ENCODE measurements at regions of chr3 and their contacts with region 1.

Region 1: GRCh38 chr3:194134757-194135528 is 1.0 kb upstream of the HES1 start:
- DNase-seq: peak; percentile 97
- H3K4me3 ChIP-seq: peak overlapping the region; percentile 56 to 68 (median 64)
- H3K27ac ChIP-seq: peak overlapping the region; percentile 90 to 99 (median 96)
- H3K4me1 ChIP-seq: peaks cover 0 to 71% (median 59%) of the 10 kb centered on the region in 4 donors
- H3K27me3 ChIP-seq: no peaks in the 10 kb centered on the region
- CTCF ChIP-seq: no peak
- EP300 ChIP-seq: peak; percentile 51 to 87 (median 69)
- POLR2A ChIP-seq: peak; percentile 28 to 49

Region 2: DNA sequence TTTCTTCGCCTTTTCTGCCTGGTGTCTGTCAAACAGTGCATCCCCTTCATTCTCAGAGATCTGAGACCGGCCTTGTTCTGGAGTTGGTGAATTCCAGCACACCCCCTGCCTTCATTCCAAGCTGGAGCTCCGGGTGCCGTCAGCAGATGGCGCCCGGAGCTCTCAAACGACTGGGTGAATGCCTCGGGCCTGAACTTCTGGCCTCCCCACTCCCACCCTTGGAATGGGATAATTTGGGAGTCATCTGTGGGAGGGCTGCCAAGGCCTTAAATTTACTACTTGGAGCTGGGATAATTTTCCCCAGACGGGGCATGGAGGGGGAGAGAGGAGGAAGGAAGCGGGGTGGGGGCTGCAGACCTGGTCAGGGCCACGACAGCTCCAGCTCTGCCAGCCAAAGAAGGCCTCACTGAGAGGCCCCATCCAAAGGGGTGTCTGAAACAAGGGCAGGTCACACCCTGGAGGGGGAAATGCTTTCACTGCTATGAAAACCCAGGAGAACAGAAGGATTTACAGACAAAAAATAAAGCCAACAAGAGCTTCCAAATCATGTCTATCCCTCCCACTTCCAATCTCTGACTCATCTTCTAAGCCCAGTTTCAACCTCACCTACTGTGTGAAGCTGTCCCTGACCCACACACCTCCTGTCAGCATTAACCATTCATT is 354.0 kb before region 1 on chr3:
- intact Hi-C with region 1: loop called (anchors 2 kb)
- DNase-seq: peak; percentile 88
- H3K4me3 ChIP-seq: no peak overlapping the region
- H3K27ac ChIP-seq: peak overlapping the region; percentile 30 to 68 (median 53)
- H3K4me1 ChIP-seq: peaks cover 0 to 16% (median 12%) of the 10 kb centered on the region in 4 donors
- H3K27me3 ChIP-seq: no peaks in the 10 kb centered on the region
- CTCF ChIP-seq: peak; percentile 70 to 89 (median 80)
- EP300 ChIP-seq: no peak
- POLR2A ChIP-seq: no peak

Region 3: DNA sequence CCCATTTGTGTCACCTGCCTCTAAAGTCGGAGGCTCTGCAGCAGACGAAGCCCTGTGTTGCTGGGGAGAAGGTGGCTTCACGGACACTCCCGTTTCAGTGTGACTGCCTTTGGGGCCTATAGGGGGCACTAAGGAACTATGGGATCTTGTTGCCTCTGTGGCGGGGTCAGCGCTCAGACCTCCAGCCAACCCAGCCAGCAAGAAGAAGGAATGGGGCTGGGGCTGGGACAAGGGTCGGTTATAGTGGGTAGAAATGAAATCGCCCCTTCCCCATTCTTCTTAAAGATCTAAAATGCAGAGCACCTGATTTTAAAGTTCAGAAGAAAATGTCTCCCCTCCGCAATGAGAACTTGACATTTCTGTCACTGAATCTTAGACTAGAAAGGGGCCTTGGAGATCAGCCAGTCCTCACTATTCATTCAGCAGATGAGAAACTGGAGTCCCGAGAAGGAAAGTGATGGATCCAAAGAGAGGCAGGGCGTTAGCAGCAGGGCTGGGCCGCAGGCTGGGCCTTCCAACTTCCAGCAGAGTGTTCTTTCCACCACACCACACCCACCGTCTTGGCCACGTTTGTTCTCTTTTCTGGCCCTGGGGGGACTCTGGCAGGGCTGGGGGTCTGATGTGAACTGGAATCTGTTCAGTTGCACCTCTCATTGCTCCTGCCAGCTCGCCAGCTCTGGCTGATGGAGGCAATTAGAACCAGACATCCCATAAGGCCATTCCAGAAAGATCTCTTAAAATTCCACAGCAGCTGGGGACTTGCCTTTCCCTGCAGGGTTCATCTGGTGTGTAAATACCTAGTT is 346.6 kb before region 1 on chr3:
- intact Hi-C with region 1: loop called (anchors 2 kb)
- DNase-seq: peak; percentile 84
- H3K4me3 ChIP-seq: no peak overlapping the region
- H3K27ac ChIP-seq: peak overlapping the region; percentile 30 to 61 (median 47)
- H3K4me1 ChIP-seq: peaks cover 3 to 18% (median 11%) of the 10 kb centered on the region in 4 donors
- H3K27me3 ChIP-seq: no peaks in the 10 kb centered on the region
- CTCF ChIP-seq: peak; percentile 25 to 81 (median 74)
- EP300 ChIP-seq: no peak
- POLR2A ChIP-seq: no peak

Region 4: GRCh38 chr3:194003125-194004057 is 131.6 kb before region 1 on chr3:
- intact Hi-C with region 1: loop called (anchors 2 kb)
- DNase-seq: peak; percentile 95
- H3K4me3 ChIP-seq: peak overlapping the region; percentile 26 to 53 (median 45)
- H3K27ac ChIP-seq: peak overlapping the region; percentile 77 to 87 (median 84)
- H3K4me1 ChIP-seq: peaks cover 0 to 24% (median 21%) of the 10 kb centered on the region in 4 donors
- H3K27me3 ChIP-seq: no peaks in the 10 kb centered on the region
- CTCF ChIP-seq: no peak
- EP300 ChIP-seq: peak; percentile 19 to 37 (median 32)
- POLR2A ChIP-seq: peak in 1 of 2 donors; percentile 21

Region 5: GRCh38 chr3:194070634-194071409 is 64.1 kb before region 1 on chr3:
- intact Hi-C with region 1: loop called (anchors 2 kb)
- DNase-seq: peak; percentile 88
- H3K4me3 ChIP-seq: peak overlapping the region; percentile 37 to 64 (median 56)
- H3K27ac ChIP-seq: peak overlapping the region; percentile 80 to 85 (median 82)
- H3K4me1 ChIP-seq: peaks cover 0 to 18% (median 16%) of the 10 kb centered on the region in 4 donors
- H3K27me3 ChIP-seq: no peaks in the 10 kb centered on the region
- CTCF ChIP-seq: no peak
- EP300 ChIP-seq: no peak
- POLR2A ChIP-seq: no peak

Region 6: DNA sequence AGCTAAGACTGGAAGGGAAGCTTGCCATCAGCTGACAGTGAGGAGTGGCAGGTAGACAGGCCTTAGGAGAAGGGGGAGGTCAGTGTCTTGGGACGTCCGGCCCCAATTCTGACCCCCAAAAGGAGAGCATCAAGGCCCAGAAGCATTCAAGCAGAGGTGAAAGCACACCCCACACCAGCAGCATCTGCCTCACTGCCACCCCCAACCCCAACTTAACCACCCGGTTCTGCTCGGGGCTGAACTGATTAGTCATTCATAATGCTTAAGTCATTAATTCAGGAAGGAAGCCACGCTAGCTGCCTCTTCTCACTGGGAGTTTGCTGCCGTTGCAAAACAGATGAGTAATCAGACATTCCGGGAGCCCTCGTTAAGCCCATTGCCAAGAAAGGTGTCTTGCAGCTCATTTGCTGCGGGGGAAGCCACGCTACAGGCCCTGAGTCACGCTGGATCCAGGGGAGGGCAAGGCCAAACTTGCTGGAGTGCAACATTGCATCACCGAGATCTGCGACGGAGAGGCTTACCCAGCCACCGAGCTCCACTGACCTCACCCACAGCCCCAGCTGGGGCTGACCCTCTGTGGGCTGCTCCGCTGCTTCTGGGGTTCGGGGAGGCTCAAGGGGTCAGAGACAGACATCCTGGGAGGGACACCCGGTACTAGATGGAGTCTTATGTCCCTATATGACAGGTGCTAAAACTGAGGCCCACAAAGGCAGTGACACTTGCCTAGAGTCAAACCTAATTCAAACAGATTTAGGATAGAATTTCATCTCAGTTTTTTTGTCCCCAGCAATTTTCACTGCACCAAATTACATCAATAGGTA is 45.4 kb before region 1 on chr3:
- intact Hi-C with region 1: loop called (anchors 5 kb)
- DNase-seq: peak; percentile 96
- H3K4me3 ChIP-seq: no peak overlapping the region
- H3K27ac ChIP-seq: peak overlapping the region; percentile 61 to 77 (median 75)
- H3K4me1 ChIP-seq: peaks cover 0 to 36% (median 19%) of the 10 kb centered on the region in 4 donors
- H3K27me3 ChIP-seq: no peaks in the 10 kb centered on the region
- CTCF ChIP-seq: no peak
- EP300 ChIP-seq: no peak
- POLR2A ChIP-seq: no peak

Region 7: DNA sequence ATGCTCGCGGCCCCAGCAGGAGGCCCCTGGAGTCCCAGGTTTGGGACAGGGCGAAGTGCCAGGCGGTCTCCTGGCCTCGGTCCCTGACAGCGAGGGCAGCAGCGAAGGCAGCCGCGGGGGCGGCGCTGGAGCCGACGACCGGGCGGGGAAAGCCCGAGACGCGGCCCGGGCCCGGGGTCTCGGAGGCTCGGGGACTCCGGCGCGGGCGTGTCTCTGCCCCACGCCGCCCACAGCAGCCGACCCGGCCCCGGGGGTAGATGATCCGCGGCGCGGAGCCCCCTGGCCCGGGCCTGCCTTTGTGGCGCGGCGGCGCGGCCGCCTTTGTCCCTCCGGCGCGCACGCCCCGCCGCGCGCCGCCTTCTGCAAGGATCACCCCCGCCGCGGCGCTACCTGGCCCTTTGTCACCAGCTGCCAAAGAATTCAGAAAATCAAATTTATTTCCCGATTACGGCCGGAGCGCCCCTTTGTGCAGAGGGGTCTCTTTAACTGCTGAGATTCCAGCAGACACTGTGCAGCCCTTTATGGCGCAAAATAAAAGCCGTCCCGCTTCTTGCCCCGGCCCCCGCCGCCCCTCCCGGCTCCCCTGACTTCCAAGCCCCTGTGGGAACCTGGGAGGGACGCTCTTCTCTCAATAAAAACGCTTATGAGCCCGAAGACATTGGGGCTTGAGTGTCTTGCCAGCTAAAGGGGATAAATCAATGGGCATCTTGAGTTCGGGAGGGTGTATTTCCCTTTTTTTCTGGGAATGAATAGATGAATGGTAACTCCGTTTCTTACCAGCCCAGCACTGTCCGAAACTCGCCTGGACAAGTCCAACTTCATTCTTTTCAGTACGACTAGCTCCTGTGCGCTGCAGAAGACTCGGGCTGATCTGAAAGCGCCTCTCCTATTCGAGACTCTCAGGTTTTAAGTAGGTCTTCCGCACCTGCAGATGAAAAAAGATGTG is 69.4 kb after region 1 on chr3:
- intact Hi-C with region 1: loop called (anchors 5 kb)
- DNase-seq: peak; percentile 44
- H3K4me3 ChIP-seq: peak overlapping the region in 3 of 4 donors; percentile 29 to 43 (median 41)
- H3K27ac ChIP-seq: no peak overlapping the region
- H3K4me1 ChIP-seq: peaks cover 0 to 26% (median 21%) of the 10 kb centered on the region in 4 donors
- H3K27me3 ChIP-seq: peaks cover 7 to 25% (median 13%) of the 10 kb centered on the region in 3 donors
- CTCF ChIP-seq: no peak
- EP300 ChIP-seq: no peak
- POLR2A ChIP-seq: no peak

Measured in sigmoid colon (tissue), 7 donors.